ENCODE measurements at regions of chr17 and their contacts with region 1.

Region 1: DNA sequence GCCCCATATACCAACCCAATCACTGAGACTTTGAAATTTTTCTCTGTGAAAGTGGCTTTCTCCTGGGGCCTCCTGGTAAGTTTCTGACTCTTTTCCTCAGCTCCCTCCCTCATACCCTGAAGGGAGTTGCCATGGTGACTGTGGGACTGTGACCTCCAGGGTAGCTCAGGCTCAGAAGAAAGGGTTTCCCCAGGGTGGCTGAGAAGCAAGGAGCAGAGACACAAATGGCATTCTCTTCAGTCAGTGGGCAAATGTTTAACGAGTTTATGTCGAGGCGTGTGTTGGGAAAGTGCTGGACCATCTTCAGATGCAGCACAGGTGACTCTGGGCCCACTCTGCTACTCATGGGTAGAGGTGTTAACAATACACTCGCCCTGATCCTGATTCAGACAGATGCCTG is 46.8 kb downstream of the MRPS23 start:
- DNase-seq: no peak
- ATAC-seq: no peak
- H3K4me3 ChIP-seq: no peak overlapping the region
- H3K27ac ChIP-seq: no peak overlapping the region
- H3K4me1 ChIP-seq: no peaks in the 10 kb centered on the region
- H3K27me3 ChIP-seq: no peaks in the 10 kb centered on the region; the same call in none of the 2 replicates
- CTCF ChIP-seq: no peak

Region 2: GRCh38 chr17:57068222-57068658 is 734.8 kb before region 1 on chr17:
- CTCF ChIA-PET with region 1: no interaction called
- POLR2A ChIA-PET with region 1: interaction called, 10 read pairs
- in situ Hi-C with region 1: no loop called
- intact Hi-C with region 1: no loop called
- DNase-seq: no peak
- ATAC-seq: peak; percentile 67; the same call in 1 of the 2 replicates
- H3K4me3 ChIP-seq: no peak overlapping the region
- H3K27ac ChIP-seq: no peak overlapping the region
- H3K4me1 ChIP-seq: no peaks in the 10 kb centered on the region
- H3K27me3 ChIP-seq: peaks cover 2% of the 10 kb centered on the region; the same call in 1 of the 2 replicates
- CTCF ChIP-seq: no peak

Region 3: GRCh38 chr17:57338257-57338914 is 464.6 kb before region 1 on chr17:
- CTCF ChIA-PET with region 1: no interaction called
- POLR2A ChIA-PET with region 1: no interaction called
- in situ Hi-C with region 1: no loop called
- intact Hi-C with region 1: no loop called
- DNase-seq: no peak
- ATAC-seq: no peak
- H3K4me3 ChIP-seq: no peak overlapping the region
- H3K27ac ChIP-seq: no peak overlapping the region
- H3K4me1 ChIP-seq: no peaks in the 10 kb centered on the region
- H3K27me3 ChIP-seq: no peaks in the 10 kb centered on the region
- CTCF ChIP-seq: no peak

Measured in Panc1 (cell line).